ENCODE measurements at regions of chr3 and their contacts with region 1.

Region 1: GRCh38 chr3:128617557-128618397 is 32.8 kb downstream of the RPN1 start:
- DNase-seq: peak; percentile 99
- ATAC-seq: peak; percentile 93
- H3K4me3 Mint-ChIP-seq: peak overlapping the region; percentile 99
- H3K27ac Mint-ChIP-seq: peak overlapping the region; percentile 95
- H3K4me1 Mint-ChIP-seq: peaks cover 46% of the 10 kb centered on the region
- H3K27me3 Mint-ChIP-seq: no peaks in the 10 kb centered on the region

Region 2: GRCh38 chr3:128607710-128608048 is 10.1 kb before region 1 on chr3:
- CTCF ChIA-PET with region 1: interaction called, 35 read pairs
- DNase-seq: no peak
- ATAC-seq: no peak
- H3K4me3 Mint-ChIP-seq: no peak overlapping the region
- H3K27ac Mint-ChIP-seq: no peak overlapping the region
- H3K4me1 Mint-ChIP-seq: peaks cover 2% of the 10 kb centered on the region
- H3K27me3 Mint-ChIP-seq: no peaks in the 10 kb centered on the region

Region 3: GRCh38 chr3:128655531-128655930 is 37.8 kb after region 1 on chr3:
- CTCF ChIA-PET with region 1: interaction called, 27 read pairs
- DNase-seq: no peak
- ATAC-seq: no peak
- H3K4me3 Mint-ChIP-seq: no peak overlapping the region
- H3K27ac Mint-ChIP-seq: no peak overlapping the region
- H3K4me1 Mint-ChIP-seq: peaks cover 17% of the 10 kb centered on the region
- H3K27me3 Mint-ChIP-seq: peaks cover 3% of the 10 kb centered on the region

Region 4: DNA sequence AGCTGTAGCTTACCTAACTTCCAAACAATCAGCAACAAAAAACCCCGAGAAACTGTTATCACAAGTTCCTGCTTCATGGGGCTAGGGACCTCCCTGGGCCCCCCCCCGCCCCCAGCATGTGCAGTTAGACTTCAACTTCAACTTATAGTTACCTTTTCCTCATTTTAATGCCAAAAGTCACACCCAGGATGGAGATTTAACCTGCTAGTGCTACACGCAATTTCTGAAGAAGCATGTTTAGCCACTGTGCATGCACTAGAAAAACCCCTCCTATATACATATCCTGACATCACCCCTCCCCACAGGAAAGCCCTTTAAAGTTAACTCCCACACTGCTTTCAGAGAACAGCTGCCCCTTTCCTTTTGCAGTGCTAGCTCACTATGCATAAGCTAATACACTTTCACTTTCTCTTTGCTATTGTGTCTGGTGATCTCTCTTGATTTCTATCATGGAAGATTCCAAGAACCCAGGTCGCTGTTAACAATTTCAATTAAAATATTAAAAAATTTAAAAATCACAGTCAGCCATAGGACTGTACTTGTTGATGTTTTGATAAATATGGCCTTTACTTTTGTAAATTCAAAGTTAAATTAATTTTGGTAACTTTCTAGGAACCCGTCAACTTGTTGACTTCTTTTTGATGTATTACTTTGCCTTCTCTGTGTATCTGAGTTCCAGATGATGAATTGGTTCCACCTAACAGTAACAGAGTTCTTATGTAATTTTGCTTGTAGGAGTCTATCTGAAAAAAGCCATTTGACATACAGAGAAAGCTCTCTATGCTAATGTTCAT is 186.4 kb after region 1 on chr3:
- CTCF ChIA-PET with region 1: interaction called, 11 read pairs
- DNase-seq: peak; percentile 84
- ATAC-seq: peak; percentile 88
- H3K4me3 Mint-ChIP-seq: peak overlapping the region; percentile 69
- H3K27ac Mint-ChIP-seq: peak overlapping the region; percentile 84
- H3K4me1 Mint-ChIP-seq: peaks cover 71% of the 10 kb centered on the region
- H3K27me3 Mint-ChIP-seq: no peaks in the 10 kb centered on the region

Region 5: GRCh38 chr3:128879125-128879969 is 261.6 kb after region 1 on chr3 and contains the start of gene ACAD9:
- CTCF ChIA-PET with region 1: interaction called, 13 read pairs
- DNase-seq: peak; percentile 98
- ATAC-seq: peak; percentile 97
- H3K4me3 Mint-ChIP-seq: peak within 1 kb of the TSS; percentile 86
- H3K27ac Mint-ChIP-seq: peak within 1 kb of the TSS; percentile 95
- H3K4me1 Mint-ChIP-seq: peaks cover 64% of the 10 kb centered on the region
- H3K27me3 Mint-ChIP-seq: peaks cover 3% of the 10 kb centered on the region
- total RNA-seq, gene ACAD9: 61.2 to 68.2 TPM